PC-3 (cell line): ENCODE measurements at regions of chr17 and their contacts with region 1.

Region 1: GRCh38 chr17:71412803-71413202 is 708.0 kb upstream of the SOX9 start:
- DNase-seq: peak; percentile 99
- ATAC-seq: peak; percentile 98
- H3K4me3 ChIP-seq: peak overlapping the region; percentile 17
- H3K27ac ChIP-seq: peak overlapping the region; percentile 93
- H3K4me1 ChIP-seq: peaks cover 43% of the 10 kb centered on the region
- H3K27me3 ChIP-seq: no peaks in the 10 kb centered on the region
- CTCF ChIP-seq: no peak

Region 2: GRCh38 chr17:71302721-71303549 is 109.9 kb before region 1 on chr17:
- CTCF ChIA-PET with region 1: no interaction called
- POLR2A ChIA-PET with region 1: interaction called, 10 read pairs
- intact Hi-C with region 1: no loop called
- DNase-seq: peak; percentile 54
- ATAC-seq: no peak
- H3K4me3 ChIP-seq: no peak overlapping the region
- H3K27ac ChIP-seq: peak overlapping the region; percentile 40
- H3K4me1 ChIP-seq: peaks cover 8% of the 10 kb centered on the region; the same call in 1 of the 2 replicates
- H3K27me3 ChIP-seq: no peaks in the 10 kb centered on the region
- CTCF ChIP-seq: no peak

Region 3: GRCh38 chr17:71392715-71393567 is 19.9 kb before region 1 on chr17:
- CTCF ChIA-PET with region 1: no interaction called
- POLR2A ChIA-PET with region 1: no interaction called
- intact Hi-C with region 1: no loop called
- DNase-seq: peak; percentile 41
- ATAC-seq: peak; percentile 31
- H3K4me3 ChIP-seq: no peak overlapping the region
- H3K27ac ChIP-seq: no peak overlapping the region
- H3K4me1 ChIP-seq: peaks cover 11% of the 10 kb centered on the region; the same call in 1 of the 2 replicates
- H3K27me3 ChIP-seq: no peaks in the 10 kb centered on the region
- CTCF ChIP-seq: no peak

Region 4: GRCh38 chr17:71444011-71444574 is 31.3 kb after region 1 on chr17:
- CTCF ChIA-PET with region 1: no interaction called
- POLR2A ChIA-PET with region 1: no interaction called
- intact Hi-C with region 1: no loop called
- DNase-seq: no peak
- ATAC-seq: no peak
- H3K4me3 ChIP-seq: no peak overlapping the region
- H3K27ac ChIP-seq: no peak overlapping the region
- H3K4me1 ChIP-seq: peaks cover 46% of the 10 kb centered on the region
- H3K27me3 ChIP-seq: no peaks in the 10 kb centered on the region
- CTCF ChIP-seq: no peak

Region 5: GRCh38 chr17:71494062-71494855 is 81.5 kb after region 1 on chr17:
- CTCF ChIA-PET with region 1: no interaction called
- POLR2A ChIA-PET with region 1: no interaction called
- intact Hi-C with region 1: no loop called
- DNase-seq: no peak
- ATAC-seq: no peak
- H3K4me3 ChIP-seq: no peak overlapping the region
- H3K27ac ChIP-seq: no peak overlapping the region
- H3K4me1 ChIP-seq: no peaks in the 10 kb centered on the region
- H3K27me3 ChIP-seq: no peaks in the 10 kb centered on the region
- CTCF ChIP-seq: no peak

Region 6: DNA sequence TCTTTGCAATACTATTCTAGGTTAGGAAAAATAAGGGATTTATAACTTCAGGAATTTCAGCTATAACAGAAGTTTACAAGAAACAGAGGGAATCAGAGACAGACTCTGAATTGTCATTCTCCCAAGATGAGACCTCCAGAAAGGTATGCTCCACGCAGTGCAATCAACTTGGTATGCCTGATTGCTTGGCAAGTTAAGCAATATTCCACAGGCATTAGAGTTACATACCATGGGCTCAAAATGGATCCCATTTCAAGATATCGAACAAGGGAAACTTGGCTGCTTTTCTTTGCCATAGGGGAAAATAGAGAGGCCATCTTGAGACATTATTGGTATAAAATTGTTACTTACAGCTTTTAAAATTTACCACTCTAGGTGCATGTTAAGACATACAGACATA is 92.4 kb after region 1 on chr17:
- CTCF ChIA-PET with region 1: no interaction called
- POLR2A ChIA-PET with region 1: no interaction called
- intact Hi-C with region 1: no loop called
- DNase-seq: no peak
- ATAC-seq: no peak
- H3K4me3 ChIP-seq: no peak overlapping the region
- H3K27ac ChIP-seq: no peak overlapping the region
- H3K4me1 ChIP-seq: peaks cover 10% of the 10 kb centered on the region; the same call in 1 of the 2 replicates
- H3K27me3 ChIP-seq: no peaks in the 10 kb centered on the region
- CTCF ChIP-seq: no peak